ENCODE measurements at regions of chr1 and their contacts with region 1.

Region 1: DNA sequence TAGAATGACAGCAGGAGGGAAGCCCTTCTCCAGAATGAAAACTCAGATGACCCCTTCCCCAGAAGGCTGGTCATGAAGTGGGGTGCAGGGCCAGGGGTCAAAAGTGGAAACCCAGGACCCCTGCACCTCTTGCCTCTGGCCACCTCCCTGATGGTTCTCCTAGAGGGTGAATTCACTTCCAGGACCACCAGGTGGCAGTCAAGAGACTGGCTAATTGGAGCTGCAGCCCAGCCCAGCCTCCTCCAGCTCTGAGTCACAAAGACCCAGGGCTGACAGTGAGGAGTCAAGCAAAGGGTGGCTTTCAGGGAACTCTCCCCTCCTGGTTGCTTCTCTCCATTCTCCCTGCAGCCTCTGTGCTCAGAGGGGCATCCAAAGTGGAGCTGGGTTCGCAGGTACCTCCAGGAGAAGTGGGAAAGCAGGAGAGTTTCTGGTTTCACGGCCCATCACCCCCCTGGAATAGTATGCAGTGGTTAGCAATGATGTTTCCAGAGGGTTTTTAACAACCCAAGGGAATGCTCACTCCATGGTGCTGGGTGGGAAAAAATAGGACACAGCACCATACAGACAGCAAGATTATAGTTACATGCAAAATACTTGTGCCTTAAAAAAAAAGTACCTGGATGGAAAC is 6.1 kb upstream of the EPHB2 start:
- DNase-seq: peak; percentile 61 to 73
- ATAC-seq: peak; percentile 91
- H3K4me3 ChIP-seq: no peak overlapping the region
- H3K27ac ChIP-seq: no peak overlapping the region
- H3K4me1 ChIP-seq: no peaks in the 10 kb centered on the region
- H3K27me3 ChIP-seq: no peaks in the 10 kb centered on the region
- CTCF ChIP-seq: peak; percentile 70 to 88 (median 77)
- POLR2A ChIP-seq: no peak

Region 2: GRCh38 chr1:22143065-22144036 is 561.2 kb before region 1 on chr1 and contains the start of gene WNT4:
- in situ Hi-C with region 1: no loop called
- intact Hi-C with region 1: no loop called
- DNase-seq: no peak
- ATAC-seq: peak; percentile 57 to 73
- H3K4me3 ChIP-seq: peak within 1 kb of the TSS; percentile 54 to 77 (median 62)
- H3K27ac ChIP-seq: peak within 1 kb of the TSS; percentile 57 to 66 (median 60)
- H3K4me1 ChIP-seq: peaks cover 6% of the 10 kb centered on the region in 2 donors
- H3K27me3 ChIP-seq: no peaks in the 10 kb centered on the region
- CTCF ChIP-seq: peak in 3 of 5 experiments; percentile 28 to 57 (median 33)
- POLR2A ChIP-seq: no peak
- total RNA-seq, gene WNT4: 0.42 to 1.1 TPM in 2 of 4 donors, not detected in the others

Region 3: GRCh38 chr1:22861764-22862440 is 157.3 kb after region 1 on chr1:
- in situ Hi-C with region 1: no loop called
- intact Hi-C with region 1: loop called (anchors 2 kb)
- DNase-seq: no peak
- ATAC-seq: no peak
- H3K4me3 ChIP-seq: no peak overlapping the region
- H3K27ac ChIP-seq: no peak overlapping the region
- H3K4me1 ChIP-seq: no peaks in the 10 kb centered on the region
- H3K27me3 ChIP-seq: peaks cover 0 to 2% (median 0%) of the 10 kb centered on the region in 3 donors
- CTCF ChIP-seq: peak in 4 of 5 experiments; percentile 34 to 50 (median 44)
- POLR2A ChIP-seq: no peak

Region 4: DNA sequence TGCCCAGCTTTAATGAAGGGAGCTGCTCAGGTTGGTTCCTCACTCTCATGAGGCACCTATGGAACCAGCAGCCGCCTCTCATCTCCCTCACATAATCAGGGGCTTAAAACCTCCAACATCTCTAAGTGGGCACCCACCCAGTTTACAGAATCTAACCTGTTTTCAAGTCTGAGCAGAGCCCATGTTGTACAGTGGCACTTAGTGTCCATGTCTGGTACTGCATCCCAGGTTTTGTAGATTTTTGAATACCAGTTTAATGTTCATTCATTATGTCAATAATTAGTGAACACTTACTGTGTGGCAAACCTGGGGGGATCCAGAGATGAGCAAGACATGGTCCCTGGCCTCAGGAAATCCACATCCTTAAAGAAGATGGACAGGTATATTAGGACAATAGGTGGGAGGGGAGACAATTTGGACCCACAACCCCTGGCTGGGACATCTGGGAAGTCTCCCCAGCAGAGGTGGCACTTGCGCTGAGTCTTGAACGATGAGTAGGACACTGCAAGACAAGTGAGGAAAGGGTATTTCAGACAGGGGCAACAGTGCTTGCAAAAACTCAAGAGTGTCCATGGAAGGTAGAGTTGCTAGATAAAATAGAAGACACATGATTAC is 184.8 kb after region 1 on chr1:
- in situ Hi-C with region 1: loop called in 3 of 4 experiments (anchors 10 to 25 kb)
- intact Hi-C with region 1: loop called (anchors 1 kb)
- DNase-seq: no peak
- ATAC-seq: no peak
- H3K4me3 ChIP-seq: no peak overlapping the region
- H3K27ac ChIP-seq: no peak overlapping the region
- H3K4me1 ChIP-seq: no peaks in the 10 kb centered on the region
- H3K27me3 ChIP-seq: no peaks in the 10 kb centered on the region
- CTCF ChIP-seq: peak in 4 of 5 experiments; percentile 30 to 63 (median 52)
- POLR2A ChIP-seq: no peak

Measured in gastrocnemius medialis (tissue), 4 donors.